CD4-positive, alpha-beta T cell (primary cell): ENCODE measurements at regions of chr19 and their contacts with region 1.

Region 1: GRCh38 chr19:56350416-56351045 is 35.9 kb upstream of the ZSCAN5A start:
- DNase-seq: peak in 12 of 14 experiments; percentile 13 to 71 (median 39)
- ATAC-seq: no peak
- H3K4me3 ChIP-seq: no peak overlapping the region
- H3K4me3 Mint-ChIP-seq: no peak overlapping the region
- H3K27ac ChIP-seq: no peak overlapping the region
- H3K27ac Mint-ChIP-seq: no peak overlapping the region
- H3K4me1 ChIP-seq: no peaks in the 10 kb centered on the region
- H3K4me1 Mint-ChIP-seq: peaks cover 7% of the 10 kb centered on the region
- H3K27me3 ChIP-seq: no peaks in the 10 kb centered on the region
- H3K27me3 Mint-ChIP-seq: no peaks in the 10 kb centered on the region
- CTCF ChIP-seq: peak; percentile 99

Region 2: DNA sequence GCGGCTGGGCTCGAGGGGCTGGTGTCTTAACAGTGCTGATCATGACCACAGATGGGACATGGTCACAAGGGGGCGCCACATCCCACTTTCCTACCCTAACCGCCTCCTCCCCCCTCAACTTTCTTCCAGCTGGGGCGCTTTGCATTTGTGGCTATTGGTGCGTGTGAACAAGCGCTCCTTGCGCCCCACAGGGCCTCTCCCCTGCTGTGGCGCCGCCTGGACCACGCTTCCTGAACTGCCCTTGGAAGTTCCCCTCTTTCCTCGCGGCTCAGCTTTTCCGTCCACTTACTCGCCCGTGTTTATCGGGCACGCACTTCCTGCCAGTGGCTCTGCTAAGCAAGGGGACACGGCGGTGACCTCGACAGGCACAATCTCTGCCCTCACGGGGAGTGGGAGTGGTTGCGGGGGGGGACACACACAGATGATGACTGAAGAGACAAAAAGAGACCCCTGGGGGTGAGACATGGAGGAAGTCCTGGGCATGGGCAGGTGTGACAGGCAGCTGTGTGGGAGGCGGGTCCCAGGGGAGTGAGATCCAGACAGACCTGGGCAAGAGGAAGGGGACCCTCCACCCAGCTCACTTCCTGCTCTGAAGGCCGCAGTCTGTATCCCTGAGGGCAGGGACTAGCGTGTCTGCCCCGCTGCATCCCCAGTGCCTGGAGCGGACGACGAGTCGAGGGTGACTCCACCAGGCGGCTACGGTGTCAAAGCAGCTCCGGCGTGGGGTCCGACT is 269.7 kb before region 1 on chr19:
- CTCF ChIA-PET with region 1: no interaction called
- POLR2A ChIA-PET with region 1: no interaction called
- intact Hi-C with region 1: loop called in 1 of 2 experiments (anchors 5 kb)
- DNase-seq: peak; percentile 50 to 83 (median 60)
- ATAC-seq: peak; percentile 48
- H3K4me3 ChIP-seq: peak overlapping the region; percentile 47
- H3K4me3 Mint-ChIP-seq: peak overlapping the region; percentile 76
- H3K27ac ChIP-seq: no peak overlapping the region
- H3K27ac Mint-ChIP-seq: no peak overlapping the region
- H3K4me1 ChIP-seq: peaks cover 10% of the 10 kb centered on the region
- H3K4me1 Mint-ChIP-seq: peaks cover 14% of the 10 kb centered on the region
- H3K27me3 ChIP-seq: peaks cover 3 to 8% of the 10 kb centered on the region in 2 experiments
- H3K27me3 Mint-ChIP-seq: peaks cover 17% of the 10 kb centered on the region
- CTCF ChIP-seq: peak; percentile 38

Region 3: GRCh38 chr19:56105090-56105701 is 245.3 kb before region 1 on chr19:
- CTCF ChIA-PET with region 1: no interaction called
- POLR2A ChIA-PET with region 1: no interaction called
- intact Hi-C with region 1: loop called in 1 of 2 experiments (anchors 1 kb)
- DNase-seq: peak; percentile 23 to 76 (median 52)
- ATAC-seq: peak; percentile 89
- H3K4me3 ChIP-seq: no peak overlapping the region
- H3K4me3 Mint-ChIP-seq: no peak overlapping the region
- H3K27ac ChIP-seq: no peak overlapping the region
- H3K27ac Mint-ChIP-seq: peak overlapping the region; percentile 54
- H3K4me1 ChIP-seq: peaks cover 45% of the 10 kb centered on the region
- H3K4me1 Mint-ChIP-seq: peaks cover 35% of the 10 kb centered on the region
- H3K27me3 ChIP-seq: no peaks in the 10 kb centered on the region
- H3K27me3 Mint-ChIP-seq: no peaks in the 10 kb centered on the region
- CTCF ChIP-seq: peak; percentile 71

Region 4: GRCh38 chr19:56252699-56253422 is 97.7 kb before region 1 on chr19:
- CTCF ChIA-PET with region 1: no interaction called
- POLR2A ChIA-PET with region 1: interaction called, 4 read pairs
- intact Hi-C with region 1: loop called (anchors 1 kb)
- DNase-seq: peak; percentile 43 to 79 (median 60)
- ATAC-seq: peak; percentile 80
- H3K4me3 ChIP-seq: no peak overlapping the region
- H3K4me3 Mint-ChIP-seq: no peak overlapping the region
- H3K27ac ChIP-seq: no peak overlapping the region
- H3K27ac Mint-ChIP-seq: no peak overlapping the region
- H3K4me1 ChIP-seq: peaks cover 3% of the 10 kb centered on the region
- H3K4me1 Mint-ChIP-seq: no peaks in the 10 kb centered on the region
- H3K27me3 ChIP-seq: no peaks in the 10 kb centered on the region
- H3K27me3 Mint-ChIP-seq: no peaks in the 10 kb centered on the region
- CTCF ChIP-seq: peak; percentile 58